PC-3 (cell line): ENCODE measurements at regions of chr4 and their contacts with region 1.

Region 1: DNA sequence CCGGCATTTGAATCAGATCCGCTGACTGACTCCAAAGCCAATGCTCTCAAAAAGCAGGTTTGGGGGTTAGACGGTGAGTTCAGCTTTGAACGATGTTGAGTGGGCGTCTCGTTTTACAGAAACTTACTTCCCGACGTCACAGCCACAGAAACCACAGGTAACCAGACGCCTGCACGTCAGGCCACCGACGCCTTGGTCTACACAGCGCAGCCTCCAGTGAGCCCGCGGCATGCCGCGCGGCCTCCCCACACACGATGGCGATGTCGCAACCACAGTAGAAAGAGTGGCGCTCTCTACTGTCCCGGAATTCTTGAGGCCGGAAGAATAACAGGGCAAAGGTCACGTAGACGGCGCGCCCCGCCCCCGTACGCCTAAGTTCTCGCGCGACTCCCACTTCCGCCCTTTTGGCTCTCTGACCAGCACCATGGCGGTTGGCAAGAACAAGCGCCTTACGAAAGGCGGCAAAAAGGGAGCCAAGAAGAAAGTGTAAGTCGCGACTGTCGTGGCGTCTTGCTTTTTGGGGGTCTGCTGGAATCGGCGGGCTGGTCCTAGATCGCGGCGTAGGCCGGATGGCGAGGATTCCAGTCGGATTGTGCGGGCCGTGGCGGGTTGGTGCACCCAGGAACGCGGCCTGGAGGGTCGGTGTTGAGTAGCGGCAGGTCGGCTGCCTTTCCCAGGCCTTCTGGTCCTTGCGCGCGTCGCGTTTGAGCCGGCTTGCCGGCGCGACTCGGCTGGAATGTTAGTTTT is at the start of gene RPS3A:
- DNase-seq: peak; percentile 95
- ATAC-seq: peak; percentile 95
- H3K4me3 ChIP-seq: peak within 1 kb of the TSS; percentile 88
- H3K27ac ChIP-seq: peak within 1 kb of the TSS; percentile 44
- H3K4me1 ChIP-seq: peaks cover 16% of the 10 kb centered on the region
- H3K27me3 ChIP-seq: no peaks in the 10 kb centered on the region
- CTCF ChIP-seq: peak; percentile 75
- total RNA-seq, gene RPS3A: 560 and 571 TPM in 2 replicates

Region 2: DNA sequence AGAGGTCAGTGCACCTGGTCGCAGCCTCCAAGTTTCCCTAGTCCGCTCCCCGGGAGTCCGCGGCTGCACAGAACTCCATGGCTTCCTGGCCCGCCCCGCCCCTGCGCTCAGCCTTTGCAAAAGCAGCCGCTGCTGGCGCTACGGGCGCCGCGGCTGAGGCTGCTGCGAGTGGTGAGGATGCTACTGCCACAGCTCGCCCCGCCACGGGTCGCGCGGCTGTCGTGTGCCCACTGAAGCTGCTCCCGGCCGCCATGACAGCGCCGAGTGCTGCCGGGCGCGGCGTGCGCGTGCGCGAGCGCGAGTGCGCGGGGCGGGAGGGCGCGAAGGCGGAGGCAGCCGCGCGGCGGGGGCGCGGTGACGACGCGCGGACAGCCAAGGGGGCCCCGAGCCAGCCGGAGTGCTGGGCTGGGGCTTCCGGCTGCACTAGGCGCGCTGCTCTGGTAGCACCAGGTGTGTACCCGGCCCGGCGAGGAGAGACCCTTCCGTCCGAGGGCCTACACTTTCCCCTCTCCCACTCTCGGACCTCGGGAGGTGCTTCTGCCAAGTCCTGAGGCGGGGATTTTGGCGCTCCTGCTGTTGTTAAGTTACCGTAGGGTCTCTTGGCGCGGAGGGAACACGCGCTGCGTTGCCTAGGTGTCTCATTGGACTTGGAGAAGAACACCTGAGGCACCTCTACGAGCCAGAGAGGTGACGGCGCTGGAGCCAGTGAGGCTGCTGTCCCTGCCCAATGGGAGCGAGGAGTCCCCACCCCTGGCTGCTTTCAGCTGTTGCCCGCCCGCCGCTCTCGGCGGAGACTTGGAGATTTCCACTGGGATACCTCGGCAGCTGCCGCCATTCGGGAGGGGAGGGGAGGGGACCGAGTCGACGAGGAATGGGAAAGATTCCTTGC is 83.7 kb before region 1 on chr4:
- CTCF ChIA-PET with region 1: no interaction called
- POLR2A ChIA-PET with region 1: no interaction called
- intact Hi-C with region 1: loop called (anchors 2 kb)
- DNase-seq: peak; percentile 78
- ATAC-seq: peak; percentile 69
- H3K4me3 ChIP-seq: peak overlapping the region; percentile 88
- H3K27ac ChIP-seq: peak overlapping the region; percentile 85
- H3K4me1 ChIP-seq: 0 out of 2 replicates have a peak, but pooled peaks cover 8% of the 10 kb centered on the region
- H3K27me3 ChIP-seq: no peaks in the 10 kb centered on the region
- CTCF ChIP-seq: no peak

Region 3: DNA sequence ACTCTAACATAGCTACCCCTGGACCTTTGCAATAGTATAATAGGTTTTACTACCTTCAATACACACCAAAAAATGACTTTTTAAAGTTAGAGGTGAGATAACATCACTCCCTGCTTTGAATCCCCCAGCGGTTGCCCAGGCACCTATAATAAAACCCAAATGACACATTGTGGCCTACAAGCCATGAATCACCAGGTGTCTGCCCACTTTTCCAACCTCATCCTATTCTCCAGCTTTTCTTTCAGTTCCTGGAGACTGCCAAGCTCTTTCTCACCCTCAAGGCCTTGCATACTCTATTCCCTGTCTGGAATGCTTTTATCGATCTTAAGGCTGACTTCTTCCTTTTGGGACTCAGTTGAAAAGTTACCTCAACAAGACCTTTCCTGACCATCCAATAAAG is 161.1 kb after region 1 on chr4:
- CTCF ChIA-PET with region 1: no interaction called
- POLR2A ChIA-PET with region 1: no interaction called
- intact Hi-C with region 1: no loop called
- DNase-seq: peak; percentile 80
- ATAC-seq: peak; percentile 89
- H3K4me3 ChIP-seq: no peak overlapping the region
- H3K27ac ChIP-seq: peak overlapping the region; percentile 59
- H3K4me1 ChIP-seq: peaks cover 21% of the 10 kb centered on the region
- H3K27me3 ChIP-seq: no peaks in the 10 kb centered on the region
- CTCF ChIP-seq: no peak

Region 4: GRCh38 chr4:151687021-151687640 is 587.7 kb after region 1 on chr4:
- CTCF ChIA-PET with region 1: no interaction called
- POLR2A ChIA-PET with region 1: interaction called, 20 read pairs
- intact Hi-C with region 1: no loop called
- DNase-seq: no peak
- ATAC-seq: no peak
- H3K4me3 ChIP-seq: no peak overlapping the region
- H3K27ac ChIP-seq: no peak overlapping the region
- H3K4me1 ChIP-seq: peaks cover 25% of the 10 kb centered on the region
- H3K27me3 ChIP-seq: no peaks in the 10 kb centered on the region
- CTCF ChIP-seq: no peak